Activated CD4-positive, alpha-beta memory T cell treated with anti-CD3 and anti-CD28 coated beads for 36 hours (primary cell): ENCODE measurements at regions of chr5 and their contacts with region 1.

Region 1: DNA sequence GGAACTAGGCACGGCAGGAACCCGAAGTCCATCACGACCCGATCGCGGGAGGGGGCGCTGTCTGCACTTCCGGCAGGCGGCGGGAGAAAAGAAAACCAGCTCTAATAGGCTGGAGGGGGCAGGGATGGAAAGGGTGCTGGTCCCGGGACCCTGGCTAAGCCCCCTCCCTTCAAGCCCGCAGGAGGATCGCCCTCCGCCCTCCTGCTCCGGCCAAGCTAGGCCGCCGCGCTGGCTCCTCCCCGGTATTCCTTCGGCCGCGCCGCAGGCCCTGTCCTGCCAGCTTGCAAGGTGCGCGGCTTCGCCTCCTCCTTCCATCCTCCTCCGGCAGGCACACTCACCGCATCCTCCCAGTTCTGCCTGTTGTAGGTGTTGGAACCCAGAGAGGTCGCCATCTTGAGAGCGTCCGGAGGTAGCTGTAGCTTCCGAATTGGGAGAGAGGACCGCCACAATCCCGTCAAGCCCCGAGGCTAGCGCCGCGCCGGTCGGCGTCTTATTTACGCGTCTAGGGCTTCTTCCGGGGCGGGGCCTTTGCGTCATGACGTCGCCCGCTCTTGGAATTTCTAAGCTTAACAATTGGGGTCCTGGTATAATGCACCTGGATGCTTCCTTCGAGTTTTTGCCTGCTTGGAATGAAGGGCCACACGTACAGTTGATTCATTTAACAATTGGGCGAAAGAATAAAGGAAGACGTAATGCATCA is at the start of gene RBM22:
- DNase-seq: peak; percentile 95
- H3K4me3 Mint-ChIP-seq: no peak within 1 kb of the TSS
- H3K27ac Mint-ChIP-seq: no peak within 1 kb of the TSS
- H3K4me1 Mint-ChIP-seq: peaks cover 7% of the 10 kb centered on the region
- H3K27me3 Mint-ChIP-seq: no peaks in the 10 kb centered on the region
- total RNA-seq, gene RBM22: 59.6 to 66.4 TPM

Region 2: DNA sequence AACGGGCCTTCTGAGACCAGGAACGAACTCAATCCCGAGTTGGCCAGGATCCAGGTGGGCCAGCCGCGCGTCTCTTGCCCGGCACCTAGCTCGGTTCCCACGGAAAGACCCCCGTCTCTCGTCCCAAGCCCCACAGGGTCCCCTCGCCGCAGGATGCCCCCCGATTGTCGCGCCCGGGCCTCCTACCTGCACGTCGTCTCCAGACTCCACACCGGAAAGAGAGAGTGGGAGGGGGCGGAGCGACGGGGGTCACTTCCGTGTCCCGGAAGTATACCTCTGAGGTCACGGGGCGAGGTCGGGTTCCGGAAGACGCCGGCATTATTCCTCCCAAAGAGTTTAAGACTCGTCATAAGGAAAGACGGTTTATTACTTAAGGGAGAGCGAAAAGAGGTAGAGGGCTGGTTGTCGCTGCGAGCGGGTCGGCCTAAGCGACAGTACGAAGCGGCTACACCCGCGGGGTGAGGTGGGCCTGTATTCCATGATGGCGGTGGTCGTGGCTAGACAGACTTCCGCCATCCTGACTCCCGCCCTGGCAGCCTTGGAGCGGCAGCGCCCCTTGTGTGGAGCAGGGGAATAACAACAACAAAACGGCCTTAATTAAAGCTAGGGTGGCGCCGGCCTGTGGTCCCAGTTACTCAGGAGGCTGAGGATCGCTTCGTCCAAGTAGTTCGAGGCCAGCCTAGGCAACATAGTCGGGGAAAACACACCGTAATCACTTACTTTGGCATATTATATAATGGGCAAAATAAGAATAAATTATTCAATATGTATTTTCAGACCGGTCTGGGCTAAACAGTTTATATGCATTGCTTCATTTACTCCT is 251.0 kb before region 1 on chr5 and contains the start of gene RPS14:
- CTCF ChIA-PET with region 1: interaction called, 7 read pairs
- POLR2A ChIA-PET with region 1: interaction called, 4 read pairs
- intact Hi-C with region 1: loop called (anchors 1 kb)
- DNase-seq: peak; percentile 96
- H3K4me3 Mint-ChIP-seq: peak within 1 kb of the TSS; percentile 91
- H3K27ac Mint-ChIP-seq: peak within 1 kb of the TSS; percentile 99
- H3K4me1 Mint-ChIP-seq: peaks cover 32% of the 10 kb centered on the region
- H3K27me3 Mint-ChIP-seq: no peaks in the 10 kb centered on the region
- total RNA-seq, gene RPS14: 3,748 to 3,882 TPM

Region 3: DNA sequence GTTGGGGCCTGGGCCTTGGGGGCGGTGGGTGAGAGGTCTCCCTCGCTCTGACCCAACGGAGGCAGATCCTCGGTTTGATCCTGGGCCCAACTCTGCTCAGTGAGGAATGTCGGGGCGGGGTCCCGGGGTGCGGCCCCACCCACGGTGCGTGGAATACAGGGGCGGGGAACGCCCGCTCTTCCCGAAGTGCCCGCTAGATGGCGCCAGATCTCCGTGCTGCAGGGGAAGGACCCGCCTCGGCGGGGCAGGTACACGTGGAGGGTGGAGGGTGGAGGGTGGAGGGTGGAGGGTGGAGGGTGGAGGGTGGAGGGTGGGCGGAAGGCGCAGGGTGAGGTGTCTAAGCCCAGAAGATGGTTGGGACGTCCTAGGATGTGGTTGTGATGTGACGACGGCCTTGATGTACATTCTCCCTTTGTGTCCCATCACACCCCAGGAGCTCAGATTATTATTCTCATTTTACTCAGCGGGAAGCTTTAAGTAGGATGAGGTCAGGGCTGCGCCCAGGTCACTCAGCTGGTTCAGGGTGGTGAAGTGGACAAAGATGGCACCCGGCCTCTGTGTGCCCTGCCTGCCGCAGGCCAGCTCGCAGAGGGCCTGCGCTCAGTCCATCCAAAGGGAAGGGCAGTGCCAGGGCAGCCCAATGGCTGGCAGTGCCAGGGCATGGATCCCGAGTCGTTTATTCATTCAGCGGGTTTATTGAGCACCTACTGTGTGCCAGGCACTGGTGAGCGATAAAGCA is 241.8 kb before region 1 on chr5:
- CTCF ChIA-PET with region 1: interaction called, 8 read pairs
- POLR2A ChIA-PET with region 1: no interaction called
- intact Hi-C with region 1: loop called (anchors 2 kb)
- DNase-seq: peak; percentile 91
- H3K4me3 Mint-ChIP-seq: peak overlapping the region; percentile 53
- H3K27ac Mint-ChIP-seq: no peak overlapping the region
- H3K4me1 Mint-ChIP-seq: peaks cover 11% of the 10 kb centered on the region
- H3K27me3 Mint-ChIP-seq: no peaks in the 10 kb centered on the region

Region 4: GRCh38 chr5:150560401-150561193 is 140.1 kb before region 1 on chr5:
- CTCF ChIA-PET with region 1: interaction called, 3 read pairs
- POLR2A ChIA-PET with region 1: no interaction called
- intact Hi-C with region 1: loop called (anchors 5 kb)
- DNase-seq: peak; percentile 85
- H3K4me3 Mint-ChIP-seq: no peak overlapping the region
- H3K27ac Mint-ChIP-seq: no peak overlapping the region
- H3K4me1 Mint-ChIP-seq: no peaks in the 10 kb centered on the region
- H3K27me3 Mint-ChIP-seq: no peaks in the 10 kb centered on the region

Region 5: GRCh38 chr5:150734579-150735384 is 34.0 kb after region 1 on chr5:
- CTCF ChIA-PET with region 1: interaction called, 17 read pairs
- POLR2A ChIA-PET with region 1: interaction called, 4 read pairs
- intact Hi-C with region 1: no loop called
- DNase-seq: peak; percentile 71
- H3K4me3 Mint-ChIP-seq: no peak overlapping the region
- H3K27ac Mint-ChIP-seq: peak overlapping the region; percentile 66
- H3K4me1 Mint-ChIP-seq: peaks cover 49% of the 10 kb centered on the region
- H3K27me3 Mint-ChIP-seq: no peaks in the 10 kb centered on the region

Region 6: DNA sequence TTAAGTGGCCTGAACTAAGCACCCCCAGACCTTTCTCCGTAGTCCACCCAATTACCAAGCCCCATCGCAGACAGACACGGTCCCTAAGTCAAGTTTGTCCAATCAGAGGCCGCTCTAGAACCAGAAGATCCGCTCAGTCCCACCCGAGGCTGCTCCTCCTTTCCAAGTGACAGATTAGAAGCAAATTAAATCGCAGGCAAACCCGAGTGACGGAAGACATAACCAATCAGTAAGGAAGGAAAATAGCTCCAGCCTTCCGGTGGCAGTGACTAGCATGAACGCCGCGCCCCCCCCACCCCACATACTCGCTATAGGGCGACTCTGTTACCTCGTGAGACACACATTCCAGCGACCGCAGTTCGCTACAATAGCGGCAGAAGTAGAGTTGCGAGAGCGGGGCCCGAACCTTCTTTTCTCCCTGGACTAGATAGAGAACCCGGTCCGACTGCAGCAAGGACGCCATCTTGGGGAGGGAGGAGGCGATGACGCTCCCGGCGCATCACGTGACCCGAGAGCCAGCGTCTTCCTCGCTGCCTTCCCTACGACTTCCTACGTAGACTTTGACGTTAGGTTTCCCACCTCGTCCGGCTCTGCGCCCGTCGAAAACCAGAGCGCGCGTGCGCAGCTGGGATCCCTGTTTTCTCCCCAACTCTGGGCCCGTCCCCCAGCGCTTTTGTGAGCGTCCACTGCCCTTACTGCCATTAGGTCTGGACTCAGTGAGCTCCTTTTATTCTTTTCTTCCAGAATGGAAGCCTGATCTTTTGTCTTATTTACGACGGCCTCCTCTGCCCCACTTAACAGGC is 58.0 kb after region 1 on chr5 and contains the start of gene DCTN4:
- CTCF ChIA-PET with region 1: interaction called, 30 read pairs
- POLR2A ChIA-PET with region 1: interaction called, 18 read pairs
- intact Hi-C with region 1: loop called (anchors 1 kb)
- DNase-seq: peak; percentile 96
- H3K4me3 Mint-ChIP-seq: no peak within 1 kb of the TSS
- H3K27ac Mint-ChIP-seq: no peak within 1 kb of the TSS
- H3K4me1 Mint-ChIP-seq: peaks cover 29% of the 10 kb centered on the region
- H3K27me3 Mint-ChIP-seq: peaks cover 2% of the 10 kb centered on the region
- total RNA-seq, gene DCTN4: 32.2 to 32.9 TPM

Region 7: DNA sequence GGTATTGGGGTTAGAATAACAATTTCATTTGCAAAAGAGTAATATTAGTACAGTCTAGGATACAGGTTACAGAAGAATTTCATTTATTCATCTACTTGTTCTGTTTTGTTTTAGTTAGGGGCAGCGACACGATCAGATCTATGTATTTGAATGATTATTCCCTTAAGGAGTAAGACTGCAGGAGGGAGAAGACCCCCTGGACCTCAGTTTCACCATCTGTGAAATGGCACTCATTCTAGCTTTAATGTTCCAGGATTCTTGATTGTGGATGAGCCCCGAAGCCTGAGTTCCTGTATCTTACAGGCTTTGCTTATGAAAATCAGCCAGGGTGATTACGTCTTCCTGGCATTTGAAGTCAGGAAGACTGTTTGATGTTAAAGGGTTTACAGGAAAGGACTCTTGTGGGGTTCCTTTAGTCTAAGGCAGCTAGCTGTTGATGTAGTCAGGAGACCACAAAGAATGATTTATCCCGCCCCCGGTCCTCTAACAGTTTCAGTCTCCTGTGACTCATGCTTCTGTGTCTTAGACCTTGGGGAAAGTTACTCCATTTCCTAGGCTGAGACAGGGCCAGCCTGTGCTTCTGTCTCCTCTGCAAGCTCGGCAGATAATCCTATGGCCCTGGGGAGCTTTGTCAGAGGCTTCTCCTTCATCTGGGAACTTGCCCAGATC is 89.3 kb after region 1 on chr5:
- CTCF ChIA-PET with region 1: interaction called, 9 read pairs
- POLR2A ChIA-PET with region 1: interaction called, 14 read pairs
- intact Hi-C with region 1: loop called (anchors 1 kb)
- DNase-seq: peak; percentile 88
- H3K4me3 Mint-ChIP-seq: peak overlapping the region; percentile 53
- H3K27ac Mint-ChIP-seq: peak overlapping the region; percentile 93
- H3K4me1 Mint-ChIP-seq: peaks cover 60% of the 10 kb centered on the region
- H3K27me3 Mint-ChIP-seq: no peaks in the 10 kb centered on the region